ENCODE measurements at regions of chr1 and their contacts with region 1.

Region 1: DNA sequence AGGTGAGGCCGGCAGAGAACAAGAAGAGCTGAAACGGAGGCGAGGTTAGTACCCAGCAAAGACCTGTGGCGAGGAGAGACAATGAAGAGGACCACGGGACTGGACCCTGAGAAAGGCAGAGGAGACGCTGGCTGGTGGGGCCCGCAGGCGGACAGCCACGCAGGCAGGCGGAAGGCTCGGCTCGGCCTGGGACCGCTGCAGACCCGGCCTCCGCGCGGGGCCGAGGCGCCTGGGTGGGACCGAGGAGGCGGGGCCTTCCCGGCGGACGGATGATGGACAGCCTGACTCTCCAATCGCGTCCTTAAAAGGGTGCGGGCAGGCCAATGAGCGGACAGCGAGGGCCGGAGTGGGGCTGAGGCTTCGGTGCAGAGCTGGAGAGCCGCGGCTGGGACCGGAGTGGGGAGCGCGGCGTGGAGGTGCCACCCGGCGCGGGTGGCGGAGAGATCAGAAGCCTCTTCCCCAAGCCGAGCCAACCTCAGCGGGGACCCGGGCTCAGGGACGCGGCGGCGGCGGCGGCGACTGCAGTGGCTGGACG is at the start of gene MPZL1:
- DNase-seq: peak; percentile 89 to 93 (median 91)
- H3K4me3 ChIP-seq: peak within 1 kb of the TSS; percentile 87 to 98 (median 89)
- H3K4me3 Mint-ChIP-seq: peak within 1 kb of the TSS; percentile 95 to 99
- H3K27ac ChIP-seq: peak within 1 kb of the TSS; percentile 55 to 83
- H3K27ac Mint-ChIP-seq: peak within 1 kb of the TSS; percentile 85 to 95 (median 92)
- H3K4me1 ChIP-seq: peaks cover 28 to 37% of the 10 kb centered on the region in 2 donors
- H3K4me1 Mint-ChIP-seq: peaks cover 58% of the 10 kb centered on the region
- H3K27me3 ChIP-seq: no peaks in the 10 kb centered on the region
- H3K27me3 Mint-ChIP-seq: peaks cover 1 to 6% (median 2%) of the 10 kb centered on the region in 3 donors
- CTCF ChIP-seq: no peak
- polyA plus RNA-seq, gene MPZL1: 23.1 to 63.6 (median 61.8) TPM

Region 2: GRCh38 chr1:167791281-167792187 is 69.8 kb after region 1 on chr1:
- intact Hi-C with region 1: no loop called
- DNase-seq: peak; percentile 51 to 91 (median 52)
- H3K4me3 ChIP-seq: no peak overlapping the region
- H3K4me3 Mint-ChIP-seq: no peak overlapping the region
- H3K27ac ChIP-seq: peak overlapping the region; percentile 22 to 72
- H3K27ac Mint-ChIP-seq: peak overlapping the region; percentile 43 to 88 (median 82)
- H3K4me1 ChIP-seq: peaks cover 14 to 16% of the 10 kb centered on the region in 2 donors
- H3K4me1 Mint-ChIP-seq: peaks cover 18% of the 10 kb centered on the region
- H3K27me3 ChIP-seq: no peaks in the 10 kb centered on the region
- H3K27me3 Mint-ChIP-seq: no peaks in the 10 kb centered on the region
- CTCF ChIP-seq: no peak

Region 3: DNA sequence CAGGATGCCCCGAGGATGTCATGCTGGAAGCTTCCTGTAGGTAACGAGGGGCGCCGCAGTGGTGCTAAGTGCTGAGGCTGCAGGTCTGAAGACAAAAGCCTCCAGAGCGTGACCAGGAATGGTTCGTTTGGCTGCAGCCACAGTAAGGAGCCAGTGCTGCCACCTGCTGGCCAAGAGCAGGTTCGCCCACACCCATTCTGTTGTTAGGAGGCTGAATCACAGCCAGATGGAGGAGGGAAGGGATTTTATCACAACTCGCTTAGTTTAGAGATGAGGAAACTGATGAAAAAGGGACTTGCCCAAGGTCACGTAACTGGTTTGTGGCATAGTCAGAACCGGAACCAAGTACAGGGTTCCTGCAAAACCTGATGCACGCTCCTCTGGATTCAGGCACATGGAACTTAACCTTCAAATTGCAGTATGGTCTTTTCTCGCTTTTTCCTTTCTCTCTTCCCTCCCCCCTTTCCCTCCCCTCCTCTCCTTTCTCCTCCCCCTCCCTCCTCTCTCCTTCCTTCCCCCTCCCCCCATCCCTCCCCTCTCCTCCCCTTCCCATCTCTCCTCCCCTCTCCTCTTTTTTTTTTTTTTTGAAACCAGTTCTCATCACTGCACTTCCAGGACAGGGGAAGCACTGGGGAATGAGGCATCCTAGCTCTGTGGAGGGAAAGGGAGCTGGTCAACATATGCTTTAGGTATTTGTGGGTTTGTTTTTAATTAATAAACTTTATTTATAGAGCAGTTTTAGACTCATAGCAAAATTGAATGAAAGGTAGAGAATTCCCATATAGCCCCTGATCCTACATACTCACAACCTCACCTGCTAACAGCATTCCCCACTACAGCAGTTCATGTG is 81.9 kb after region 1 on chr1:
- intact Hi-C with region 1: loop called (anchors 5 kb)
- DNase-seq: peak; percentile 94 to 98 (median 96)
- H3K4me3 ChIP-seq: no peak overlapping the region
- H3K4me3 Mint-ChIP-seq: peak overlapping the region in 1 of 2 donors; percentile 71
- H3K27ac ChIP-seq: peak overlapping the region in 1 of 2 donors; percentile 34
- H3K27ac Mint-ChIP-seq: peak overlapping the region in 6 of 7 donors; percentile 20 to 80 (median 66)
- H3K4me1 ChIP-seq: peaks cover 9 to 23% of the 10 kb centered on the region in 2 donors
- H3K4me1 Mint-ChIP-seq: peaks cover 19% of the 10 kb centered on the region
- H3K27me3 ChIP-seq: no peaks in the 10 kb centered on the region
- H3K27me3 Mint-ChIP-seq: peaks cover 0 to 5% (median 0%) of the 10 kb centered on the region in 3 donors
- CTCF ChIP-seq: peak; percentile 95

Measured in CD14-positive monocyte (primary cell).